K562 (cell line): ENCODE measurements at regions of chr1 and their contacts with region 1.

Region 1: GRCh38 chr1:2194898-2195673 is 514 bp upstream of the FAAP20 start:
- DNase-seq: peak; percentile 77 to 93 (median 87)
- ATAC-seq: peak; percentile 81
- H3K4me3 ChIP-seq: peak overlapping the region; percentile 54
- H3K27ac ChIP-seq: peak overlapping the region; percentile 75
- H3K4me1 ChIP-seq: peaks cover 39 to 85% of the 10 kb centered on the region in 2 experiments
- H3K27me3 ChIP-seq: no peaks in the 10 kb centered on the region
- CTCF ChIP-seq: peak; percentile 84 to 96 (median 91)
- EP300 ChIP-seq: no peak
- POLR2A ChIP-seq: peak; percentile 73
- RAD21 ChIP-seq: peak; percentile 97 to 99

Region 2: GRCh38 chr1:2233997-2234761 is 39.1 kb after region 1 on chr1:
- CTCF ChIA-PET with region 1: no interaction called
- POLR2A ChIA-PET with region 1: interaction called, 7 read pairs
- in situ Hi-C with region 1: loop called (anchors 5 kb)
- intact Hi-C with region 1: loop called (anchors 2 kb)
- DNase-seq: no peak
- ATAC-seq: no peak
- H3K4me3 ChIP-seq: no peak overlapping the region
- H3K27ac ChIP-seq: no peak overlapping the region
- H3K4me1 ChIP-seq: peaks cover 36 to 94% of the 10 kb centered on the region in 2 experiments
- H3K27me3 ChIP-seq: no peaks in the 10 kb centered on the region
- CTCF ChIP-seq: no peak
- EP300 ChIP-seq: no peak
- POLR2A ChIP-seq: no peak
- RAD21 ChIP-seq: no peak

Region 3: GRCh38 chr1:2248127-2248826 is 53.2 kb after region 1 on chr1:
- CTCF ChIA-PET with region 1: no interaction called
- POLR2A ChIA-PET with region 1: no interaction called
- in situ Hi-C with region 1: no loop called
- intact Hi-C with region 1: no loop called
- DNase-seq: no peak
- ATAC-seq: no peak
- H3K4me3 ChIP-seq: no peak overlapping the region
- H3K27ac ChIP-seq: no peak overlapping the region
- H3K4me1 ChIP-seq: peaks cover 0 to 52% of the 10 kb centered on the region in 2 experiments; a peak in 2 of 5 replicates
- H3K27me3 ChIP-seq: no peaks in the 10 kb centered on the region
- CTCF ChIP-seq: no peak
- EP300 ChIP-seq: no peak
- POLR2A ChIP-seq: no peak
- RAD21 ChIP-seq: no peak

Region 4: GRCh38 chr1:2270260-2271100 is 75.4 kb after region 1 on chr1:
- CTCF ChIA-PET with region 1: no interaction called
- POLR2A ChIA-PET with region 1: no interaction called
- in situ Hi-C with region 1: no loop called
- intact Hi-C with region 1: no loop called
- DNase-seq: no peak
- ATAC-seq: no peak
- H3K4me3 ChIP-seq: no peak overlapping the region
- H3K27ac ChIP-seq: no peak overlapping the region
- H3K4me1 ChIP-seq: peaks cover 17 to 77% of the 10 kb centered on the region in 2 experiments
- H3K27me3 ChIP-seq: no peaks in the 10 kb centered on the region
- CTCF ChIP-seq: no peak
- EP300 ChIP-seq: no peak
- POLR2A ChIP-seq: no peak
- RAD21 ChIP-seq: no peak

Region 5: GRCh38 chr1:2314803-2315673 is 120.0 kb after region 1 on chr1:
- CTCF ChIA-PET with region 1: interaction called, 8 read pairs
- POLR2A ChIA-PET with region 1: interaction called, 3 read pairs
- in situ Hi-C with region 1: no loop called
- intact Hi-C with region 1: loop called (anchors 5 kb)
- DNase-seq: peak; percentile 62 to 97 (median 96)
- ATAC-seq: peak; percentile 61
- H3K4me3 ChIP-seq: peak overlapping the region; percentile 27
- H3K27ac ChIP-seq: peak overlapping the region; percentile 50; the same call in 1 of the 3 replicates
- H3K4me1 ChIP-seq: peaks cover 10 to 88% of the 10 kb centered on the region in 2 experiments; a peak in 4 of 5 replicates
- H3K27me3 ChIP-seq: peaks cover 19 to 27% of the 10 kb centered on the region in 2 experiments; a peak in 4 of 5 replicates
- CTCF ChIP-seq: peak; percentile 51 to 63 (median 57); a peak in 5 of 6 replicates
- EP300 ChIP-seq: no peak
- POLR2A ChIP-seq: no peak
- RAD21 ChIP-seq: no peak

Region 6: GRCh38 chr1:2360588-2361364 is 165.7 kb after region 1 on chr1:
- CTCF ChIA-PET with region 1: no interaction called
- POLR2A ChIA-PET with region 1: no interaction called
- in situ Hi-C with region 1: no loop called
- intact Hi-C with region 1: no loop called
- DNase-seq: no peak
- ATAC-seq: no peak
- H3K4me3 ChIP-seq: no peak overlapping the region
- H3K27ac ChIP-seq: no peak overlapping the region
- H3K4me1 ChIP-seq: peaks cover 0 to 11% of the 10 kb centered on the region in 2 experiments; a peak in 1 of 5 replicates
- H3K27me3 ChIP-seq: peaks cover 49 to 55% of the 10 kb centered on the region in 2 experiments
- CTCF ChIP-seq: no peak
- EP300 ChIP-seq: no peak
- POLR2A ChIP-seq: no peak
- RAD21 ChIP-seq: no peak

Region 7: DNA sequence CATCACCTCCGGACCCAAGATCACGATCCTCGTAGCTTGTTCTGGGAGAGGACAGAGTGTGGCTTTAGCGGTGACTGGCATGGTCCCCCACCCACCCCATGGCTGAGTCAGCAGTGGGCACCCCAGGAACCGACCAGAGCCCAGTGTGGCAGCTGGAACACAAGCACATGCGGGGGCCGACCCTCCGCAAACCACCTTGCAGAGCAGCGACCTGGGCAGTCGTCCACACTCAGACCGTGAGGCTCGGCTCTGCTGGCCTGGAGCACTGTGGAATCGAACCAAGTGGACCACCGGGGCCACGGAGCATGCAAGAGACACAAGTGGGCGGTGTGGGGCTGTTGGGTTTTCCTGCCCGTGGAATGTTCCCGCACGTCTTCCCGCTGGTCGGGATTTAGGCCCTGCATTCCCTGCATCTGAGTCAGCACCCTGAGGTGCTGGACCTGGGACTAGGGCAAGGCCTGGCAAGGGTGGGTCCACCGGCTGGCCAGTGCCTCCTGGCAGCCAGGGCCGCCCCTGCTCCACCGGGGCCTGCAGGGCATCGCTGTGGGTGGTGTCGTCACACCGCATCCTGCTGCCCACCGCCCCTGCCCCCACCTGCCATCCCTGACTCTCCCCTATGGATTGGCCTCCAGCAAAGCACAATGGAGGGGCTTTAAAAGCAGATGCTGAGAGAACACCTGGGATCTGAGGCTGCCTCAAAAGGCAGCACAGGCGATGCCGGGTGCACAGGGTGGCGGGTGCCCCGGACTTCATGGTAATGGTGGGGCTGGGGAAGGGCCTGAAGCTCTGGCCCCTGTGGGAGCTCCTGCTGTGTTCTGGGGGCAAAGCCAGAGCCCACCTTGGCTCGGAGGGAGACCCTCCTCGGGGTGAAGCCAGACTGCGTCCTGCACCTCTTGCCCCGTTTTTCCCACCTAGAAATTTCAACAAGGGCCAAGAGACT is 177.7 kb after region 1 on chr1:
- CTCF ChIA-PET with region 1: no interaction called
- POLR2A ChIA-PET with region 1: interaction called, 3 read pairs
- in situ Hi-C with region 1: loop called (anchors 10 kb)
- intact Hi-C with region 1: no loop called
- DNase-seq: no peak
- ATAC-seq: no peak
- H3K4me3 ChIP-seq: no peak overlapping the region
- H3K27ac ChIP-seq: no peak overlapping the region; the same call in 2 of the 3 replicates
- H3K4me1 ChIP-seq: peaks cover 0 to 44% of the 10 kb centered on the region in 2 experiments; a peak in 2 of 5 replicates
- H3K27me3 ChIP-seq: peaks cover 58 to 86% of the 10 kb centered on the region in 2 experiments
- CTCF ChIP-seq: no peak
- EP300 ChIP-seq: no peak
- POLR2A ChIP-seq: no peak
- RAD21 ChIP-seq: no peak

Region 8: GRCh38 chr1:2381741-2382620 is 186.9 kb after region 1 on chr1:
- CTCF ChIA-PET with region 1: interaction called, 44 read pairs
- POLR2A ChIA-PET with region 1: interaction called, 8 read pairs
- in situ Hi-C with region 1: loop called (anchors 10 kb)
- intact Hi-C with region 1: loop called (anchors 1 kb)
- DNase-seq: peak; percentile 84 to 93 (median 92)
- ATAC-seq: peak; percentile 98
- H3K4me3 ChIP-seq: no peak overlapping the region
- H3K27ac ChIP-seq: no peak overlapping the region
- H3K4me1 ChIP-seq: peaks cover 0 to 52% of the 10 kb centered on the region in 2 experiments; a peak in 2 of 5 replicates
- H3K27me3 ChIP-seq: peaks cover 16 to 47% of the 10 kb centered on the region in 2 experiments; a peak in 4 of 5 replicates
- CTCF ChIP-seq: peak; percentile 91 to 96 (median 96)
- EP300 ChIP-seq: no peak
- POLR2A ChIP-seq: no peak
- RAD21 ChIP-seq: peak; percentile 92 to 99

Region 9: GRCh38 chr1:2525920-2526823 is 331.1 kb after region 1 on chr1 and contains the start of gene PANK4:
- CTCF ChIA-PET with region 1: interaction called, 4 read pairs
- POLR2A ChIA-PET with region 1: no interaction called
- in situ Hi-C with region 1: loop called (anchors 25 kb)
- intact Hi-C with region 1: no loop called
- DNase-seq: peak; percentile 89 to 97 (median 93)
- ATAC-seq: peak; percentile 95
- H3K4me3 ChIP-seq: peak within 1 kb of the TSS; percentile 99
- H3K27ac ChIP-seq: peak within 1 kb of the TSS; percentile 84
- H3K4me1 ChIP-seq: peaks cover 24 to 82% of the 10 kb centered on the region in 2 experiments; a peak in 4 of 5 replicates
- H3K27me3 ChIP-seq: peaks cover 19 to 21% of the 10 kb centered on the region in 2 experiments; a peak in 4 of 5 replicates
- CTCF ChIP-seq: no peak
- EP300 ChIP-seq: no peak
- POLR2A ChIP-seq: peak; percentile 85
- RAD21 ChIP-seq: no peak
- polyA plus RNA-seq, gene PANK4: 0.93 to 1.4 TPM

Region 10: DNA sequence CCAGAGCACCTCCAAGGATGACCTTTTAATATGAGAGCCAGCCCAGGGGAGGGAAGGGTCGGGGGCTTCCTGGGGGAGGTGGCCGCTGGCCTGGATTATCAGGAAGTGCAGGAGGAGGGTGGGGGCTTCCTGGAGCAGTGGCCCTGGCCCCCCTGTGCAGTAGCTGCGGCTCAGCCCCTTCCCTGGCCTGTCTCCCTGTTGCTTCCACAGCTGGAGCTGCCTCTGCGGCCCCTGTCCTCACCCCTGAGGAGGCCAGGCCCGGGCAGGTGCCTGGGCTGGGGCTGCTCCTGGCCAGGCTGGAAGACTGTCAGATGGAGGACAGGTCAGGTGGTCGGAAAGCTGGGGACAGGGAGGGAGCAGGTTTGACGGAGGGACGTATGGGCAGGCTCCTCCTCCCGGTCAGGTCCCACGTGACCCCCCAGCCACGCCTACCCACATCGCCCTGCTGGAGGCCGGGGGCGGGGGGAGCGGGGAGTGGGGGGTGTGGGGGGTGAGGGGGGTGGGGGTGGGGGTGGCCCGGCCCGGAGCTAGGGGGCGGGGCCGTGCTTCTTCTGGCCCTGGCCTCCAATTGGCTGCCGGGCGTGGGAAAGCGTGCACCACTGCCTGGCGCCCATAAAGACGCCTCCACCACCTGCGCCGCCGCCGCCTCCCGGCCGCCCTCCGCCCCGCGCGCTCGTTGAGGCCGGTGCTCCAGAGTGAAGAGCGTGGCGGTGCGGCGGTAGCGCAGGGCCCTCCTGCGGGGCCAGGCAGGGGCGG is 350.9 kb after region 1 on chr1:
- CTCF ChIA-PET with region 1: no interaction called
- POLR2A ChIA-PET with region 1: interaction called, 3 read pairs
- in situ Hi-C with region 1: loop called (anchors 25 kb)
- intact Hi-C with region 1: loop called (anchors 10 kb)
- DNase-seq: peak; percentile 96 to 99 (median 98)
- ATAC-seq: peak; percentile 73
- H3K4me3 ChIP-seq: peak overlapping the region; percentile 62
- H3K27ac ChIP-seq: peak overlapping the region; percentile 79
- H3K4me1 ChIP-seq: peaks cover 72 to 90% of the 10 kb centered on the region in 2 experiments
- H3K27me3 ChIP-seq: no peaks in the 10 kb centered on the region
- CTCF ChIP-seq: no peak
- EP300 ChIP-seq: no peak
- POLR2A ChIP-seq: peak; percentile 79
- RAD21 ChIP-seq: no peak